HAP-1 (cell line): ENCODE measurements at regions of chr4 and their contacts with region 1.

Region 1: DNA sequence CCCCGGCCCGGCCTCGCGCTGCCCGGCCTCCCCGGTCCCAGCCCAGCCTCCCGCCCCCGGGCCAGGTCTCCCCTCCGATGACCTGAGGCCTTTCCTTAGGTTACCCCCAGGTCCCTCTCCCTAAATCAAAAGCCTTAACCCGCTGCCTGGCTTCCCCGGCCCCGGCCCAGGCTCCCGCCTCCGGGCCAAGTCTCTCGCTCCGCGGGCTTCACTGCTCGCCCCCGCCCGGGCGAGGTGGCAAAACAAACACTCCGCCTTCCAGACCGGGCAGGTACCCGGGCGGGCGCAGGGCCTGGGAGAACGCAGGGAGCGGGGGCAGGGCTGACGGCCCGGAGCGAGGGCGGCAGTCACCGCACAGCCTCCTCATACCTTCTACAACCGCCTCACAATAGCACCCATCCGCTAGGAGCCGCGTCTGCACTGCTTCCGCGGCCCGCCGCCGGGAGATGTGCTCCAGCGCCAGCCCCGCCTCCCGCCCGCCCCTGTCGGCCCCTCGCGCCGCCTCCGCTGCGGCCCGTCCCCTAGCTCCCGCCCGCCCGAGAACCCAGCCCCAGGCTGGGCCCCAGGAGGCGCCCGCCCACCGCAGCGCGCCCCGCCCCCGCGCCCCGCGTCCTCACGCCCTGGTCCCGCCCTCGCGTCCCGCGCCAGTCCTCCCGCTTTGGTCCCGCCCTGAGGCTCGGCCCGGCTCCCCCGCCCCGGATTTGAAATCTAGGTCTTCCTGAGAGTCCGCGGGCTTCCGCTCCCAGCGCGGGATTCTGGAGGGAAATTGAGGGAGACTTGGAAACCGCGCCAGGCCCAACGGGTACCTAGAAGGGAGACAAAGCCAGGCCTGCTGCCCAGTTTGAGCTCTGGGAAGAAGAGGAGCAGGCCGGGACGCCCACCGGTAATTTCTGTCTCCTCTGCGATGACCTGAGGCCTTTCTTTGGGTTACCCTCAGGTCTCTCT is at the starts of genes CASP3 and PRIMPOL:
- DNase-seq: peak; percentile 93 to 98
- H3K4me3 ChIP-seq: peak within 1 kb of the TSS; percentile 90
- H3K4me1 ChIP-seq: peaks cover 27% of the 10 kb centered on the region
- H3K27me3 ChIP-seq: no peaks in the 10 kb centered on the region

Region 2: DNA sequence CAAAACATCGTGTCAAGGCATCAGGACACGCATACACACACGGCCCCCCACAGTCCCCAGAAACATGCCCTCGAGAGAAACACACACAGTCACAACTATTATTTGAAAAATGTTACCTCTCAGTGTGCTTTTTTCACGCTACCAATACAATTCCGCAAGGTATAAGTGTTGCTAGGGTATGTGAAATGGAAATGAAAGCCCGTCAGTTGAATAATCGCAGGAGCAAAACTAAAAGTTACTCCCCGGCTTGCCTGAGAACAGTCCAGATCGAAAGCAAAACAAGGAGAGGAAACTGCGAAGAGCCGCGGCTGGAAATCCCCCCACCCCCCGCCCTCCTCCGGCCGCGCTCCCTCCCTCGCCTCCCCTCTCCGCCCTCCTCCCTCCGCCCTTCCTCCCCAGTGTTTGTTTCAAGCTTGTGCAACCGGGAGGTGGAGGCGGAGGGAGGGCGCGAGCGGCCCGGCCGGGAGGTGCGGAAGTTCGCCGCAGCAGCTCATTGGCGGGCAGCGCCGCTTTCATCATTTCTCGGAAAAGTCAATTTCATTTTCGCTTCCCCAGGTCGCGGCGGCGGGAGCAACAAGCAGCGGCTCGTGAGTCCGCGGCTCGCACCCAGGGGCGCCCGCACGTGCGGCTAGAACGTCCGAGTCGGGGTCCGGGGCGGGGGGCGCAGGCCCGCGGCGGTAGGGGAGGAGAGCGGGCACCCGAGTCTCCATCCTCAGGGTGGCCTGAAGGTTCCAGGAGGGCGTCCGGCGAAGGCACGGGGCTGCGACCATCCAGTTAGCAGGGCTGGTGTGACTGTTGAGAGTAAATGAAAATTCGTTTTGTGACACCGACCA is 174.8 kb before region 1 on chr4 and contains the start of gene IRF2:
- in situ Hi-C with region 1: loop called (anchors 10 kb)
- DNase-seq: peak; percentile 92 to 97
- H3K4me3 ChIP-seq: peak within 1 kb of the TSS; percentile 72
- H3K4me1 ChIP-seq: peaks cover 9% of the 10 kb centered on the region
- H3K27me3 ChIP-seq: no peaks in the 10 kb centered on the region

Region 3: GRCh38 chr4:185171373-185172071 is 522.2 kb after region 1 on chr4:
- in situ Hi-C with region 1: no loop called
- DNase-seq: no peak
- H3K4me3 ChIP-seq: no peak overlapping the region
- H3K4me1 ChIP-seq: peaks cover 6% of the 10 kb centered on the region
- H3K27me3 ChIP-seq: no peaks in the 10 kb centered on the region